ENCODE measurements at regions of chr3 and their contacts with region 1.

Region 1: GRCh38 chr3:37967260-37967881 is 23.2 kb upstream of the VILL start:
- DNase-seq: peak in 1 of 2 donors; percentile 76
- ATAC-seq: peak; percentile 67 to 77 (median 69)
- H3K4me3 ChIP-seq: no peak overlapping the region
- H3K4me3 Mint-ChIP-seq: no peak overlapping the region
- H3K27ac ChIP-seq: no peak overlapping the region
- H3K27ac Mint-ChIP-seq: no peak overlapping the region
- H3K4me1 ChIP-seq: no peaks in the 10 kb centered on the region
- H3K4me1 Mint-ChIP-seq: no peaks in the 10 kb centered on the region
- H3K27me3 ChIP-seq: no peaks in the 10 kb centered on the region
- H3K27me3 Mint-ChIP-seq: peaks cover 5 to 11% of the 10 kb centered on the region in 2 donors
- CTCF ChIP-seq: peak; percentile 71

Region 2: GRCh38 chr3:37855363-37855970 is 111.9 kb before region 1 on chr3:
- intact Hi-C with region 1: loop called (anchors 1 kb)
- DNase-seq: peak; percentile 62 to 81
- ATAC-seq: peak; percentile 51 to 56 (median 55)
- H3K4me3 ChIP-seq: no peak overlapping the region
- H3K4me3 Mint-ChIP-seq: no peak overlapping the region
- H3K27ac ChIP-seq: no peak overlapping the region
- H3K27ac Mint-ChIP-seq: no peak overlapping the region
- H3K4me1 ChIP-seq: peaks cover 8% of the 10 kb centered on the region
- H3K4me1 Mint-ChIP-seq: peaks cover under 1 to 4% of the 10 kb centered on the region in 2 donors
- H3K27me3 ChIP-seq: no peaks in the 10 kb centered on the region
- H3K27me3 Mint-ChIP-seq: peaks cover 0 to 14% of the 10 kb centered on the region in 2 donors
- CTCF ChIP-seq: peak; percentile 89

Measured in natural killer cell (primary cell).